Activated T-helper 2 cell treated with anti-CD3 and anti-CD28 coated beads, Interferon-gamma antibody, Interleukin-2, Interleukin-4, amounts not matched to agents 10 μg/mL and 5 μg/mL and 100 μg/mL, durations not matched to agents 14 hours and 24 hours and 36 hours (primary cell): ENCODE measurements at regions of chr1 and their contacts with region 1.

Region 1: GRCh38 chr1:156705918-156706656 is 704 bp upstream of the CRABP2 start:
- DNase-seq: peak; percentile 50
- H3K4me3 Mint-ChIP-seq: peak overlapping the region; percentile 76
- H3K27ac Mint-ChIP-seq: no peak overlapping the region
- H3K4me1 Mint-ChIP-seq: peaks cover 13% of the 10 kb centered on the region
- H3K27me3 Mint-ChIP-seq: peaks cover 52% of the 10 kb centered on the region

Region 2: DNA sequence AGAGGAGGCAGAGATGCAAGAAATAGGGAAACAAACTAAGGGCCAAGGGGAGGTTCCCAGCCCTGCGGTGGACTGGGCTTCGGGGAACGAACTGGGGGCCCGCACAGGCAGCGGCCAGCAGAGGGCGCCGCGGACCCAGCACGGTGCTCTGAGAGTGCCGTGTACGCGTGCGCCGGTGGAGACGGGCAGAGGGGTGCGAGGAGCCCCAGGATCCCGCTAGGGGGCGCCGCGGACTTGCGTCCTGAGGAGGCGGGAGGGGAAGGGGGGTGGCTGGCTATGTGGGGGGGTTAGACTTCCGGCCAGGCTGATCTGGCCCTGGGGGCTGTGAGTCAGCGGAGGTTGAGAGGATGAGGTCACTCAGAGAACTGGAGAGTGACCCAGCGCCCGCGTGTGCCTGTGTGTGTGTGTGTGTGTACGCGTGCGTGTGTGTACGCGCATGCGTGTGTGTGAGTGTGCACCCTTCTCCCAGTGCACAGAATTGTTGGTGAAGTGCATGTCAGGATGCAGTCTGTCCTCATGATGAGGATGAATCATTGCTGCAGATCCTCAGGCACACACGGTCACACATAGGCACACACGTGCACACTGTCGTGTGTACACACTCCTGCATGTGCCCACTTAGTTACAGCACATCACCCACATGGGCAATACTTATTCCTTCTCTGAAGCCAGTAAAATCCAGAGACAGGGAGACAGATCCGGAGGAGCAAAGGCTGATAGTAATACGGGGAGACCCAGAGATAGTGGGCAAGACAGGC is 45.9 kb before region 1 on chr1:
- intact Hi-C with region 1: loop called (anchors 1 kb)
- DNase-seq: peak; percentile 89
- H3K4me3 Mint-ChIP-seq: peak overlapping the region; percentile 90
- H3K27ac Mint-ChIP-seq: peak overlapping the region; percentile 97
- H3K4me1 Mint-ChIP-seq: peaks cover 41% of the 10 kb centered on the region
- H3K27me3 Mint-ChIP-seq: peaks cover 26% of the 10 kb centered on the region

Region 3: GRCh38 chr1:156689035-156689952 is 16.8 kb before region 1 on chr1:
- intact Hi-C with region 1: loop called (anchors 1 kb)
- DNase-seq: peak; percentile 57
- H3K4me3 Mint-ChIP-seq: no peak overlapping the region
- H3K27ac Mint-ChIP-seq: no peak overlapping the region
- H3K4me1 Mint-ChIP-seq: peaks cover 20% of the 10 kb centered on the region
- H3K27me3 Mint-ChIP-seq: peaks cover 51% of the 10 kb centered on the region

Region 4: DNA sequence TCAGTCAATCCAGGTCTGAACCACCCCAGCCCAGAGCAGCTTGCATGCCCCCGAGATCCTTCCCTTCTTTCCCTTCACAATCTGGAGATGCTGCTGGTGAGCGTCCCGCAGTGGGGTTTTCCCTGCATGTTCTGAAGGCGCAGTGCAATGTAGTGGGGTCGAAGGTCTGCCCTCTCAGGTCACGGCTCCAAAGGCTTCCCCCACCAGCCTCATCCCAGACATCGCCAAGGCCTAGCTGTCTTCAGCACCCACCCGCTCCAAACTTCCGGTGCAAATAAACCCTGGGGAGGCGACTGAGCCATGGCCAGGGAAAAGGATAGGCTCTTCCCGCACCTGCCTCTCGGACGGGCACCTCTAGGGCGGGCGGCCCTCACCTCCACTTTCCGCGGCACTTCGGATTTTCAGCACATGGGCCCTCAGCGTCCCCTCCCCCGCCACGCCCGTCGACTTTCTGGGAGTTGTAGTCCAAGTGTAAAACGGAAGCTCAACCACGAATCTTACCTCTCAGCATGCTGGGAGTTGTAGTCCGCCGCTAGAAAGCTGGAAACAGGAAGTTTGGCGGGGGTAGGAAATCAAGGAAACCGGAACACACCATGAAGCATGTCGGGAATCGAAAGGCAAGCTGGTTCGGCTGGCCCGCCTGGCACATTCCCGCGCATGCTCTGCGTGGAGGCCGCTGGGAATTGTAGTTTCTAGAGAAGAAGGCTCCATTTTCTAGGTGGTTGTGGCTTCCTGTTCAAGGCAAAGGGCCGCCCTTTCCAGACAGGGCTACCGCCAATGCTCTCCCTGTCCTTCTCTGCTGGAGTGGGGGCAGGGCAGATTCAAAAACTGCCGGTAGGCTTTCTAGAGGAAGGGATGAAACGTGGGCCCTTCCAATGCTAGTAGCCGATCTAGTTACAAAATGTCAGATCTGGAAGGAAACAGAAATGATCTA is 34.9 kb after region 1 on chr1 and contains the start of gene MRPL24:
- intact Hi-C with region 1: no loop called
- DNase-seq: peak; percentile 97
- H3K4me3 Mint-ChIP-seq: peak within 1 kb of the TSS; percentile 95
- H3K27ac Mint-ChIP-seq: peak within 1 kb of the TSS; percentile 92
- H3K4me1 Mint-ChIP-seq: peaks cover 29% of the 10 kb centered on the region
- H3K27me3 Mint-ChIP-seq: no peaks in the 10 kb centered on the region
- total RNA-seq, gene MRPL24: 116 and 124 TPM in 2 replicates